Caco-2 (cell line): ENCODE measurements at regions of chr17 and their contacts with region 1.

Region 1: GRCh38 chr17:50200457-50201275 is 765 bp downstream of the COL1A1 start:
- DNase-seq: peak; percentile 96 to 98
- H3K4me3 ChIP-seq: peak overlapping the region; percentile 42
- H3K4me3 Mint-ChIP-seq: peak overlapping the region; percentile 73
- H3K27ac Mint-ChIP-seq: peak overlapping the region; percentile 7
- H3K4me1 ChIP-seq: peaks cover 23% of the 10 kb centered on the region
- H3K4me1 Mint-ChIP-seq: peaks cover 20% of the 10 kb centered on the region
- H3K27me3 ChIP-seq: 0 out of 2 replicates have a peak, but pooled peaks cover 1% of the 10 kb centered on the region
- H3K27me3 Mint-ChIP-seq: no peaks in the 10 kb centered on the region
- CTCF ChIP-seq: peak; percentile 99 to 100

Region 2: GRCh38 chr17:50101346-50102163 is 99.1 kb before region 1 on chr17:
- CTCF ChIA-PET with region 1: no interaction called
- POLR2A ChIA-PET with region 1: no interaction called
- intact Hi-C with region 1: no loop called
- DNase-seq: no peak
- H3K4me3 ChIP-seq: no peak overlapping the region
- H3K4me3 Mint-ChIP-seq: no peak overlapping the region
- H3K27ac Mint-ChIP-seq: no peak overlapping the region
- H3K4me1 ChIP-seq: no peaks in the 10 kb centered on the region
- H3K4me1 Mint-ChIP-seq: no peaks in the 10 kb centered on the region
- H3K27me3 ChIP-seq: no peaks in the 10 kb centered on the region
- H3K27me3 Mint-ChIP-seq: no peaks in the 10 kb centered on the region
- CTCF ChIP-seq: no peak

Region 3: GRCh38 chr17:50169121-50169764 is 31.4 kb before region 1 on chr17:
- CTCF ChIA-PET with region 1: interaction called, 99 read pairs
- POLR2A ChIA-PET with region 1: interaction called, 3 read pairs
- intact Hi-C with region 1: loop called (anchors 1 kb)
- DNase-seq: peak; percentile 88
- H3K4me3 ChIP-seq: no peak overlapping the region
- H3K4me3 Mint-ChIP-seq: no peak overlapping the region
- H3K27ac Mint-ChIP-seq: no peak overlapping the region
- H3K4me1 ChIP-seq: peaks cover 3% of the 10 kb centered on the region; the same call in 1 of the 2 replicates
- H3K4me1 Mint-ChIP-seq: peaks cover 7% of the 10 kb centered on the region
- H3K27me3 ChIP-seq: no peaks in the 10 kb centered on the region
- H3K27me3 Mint-ChIP-seq: no peaks in the 10 kb centered on the region
- CTCF ChIP-seq: peak; percentile 98 to 100

Region 4: GRCh38 chr17:50221864-50222545 is 21.3 kb after region 1 on chr17:
- CTCF ChIA-PET with region 1: interaction called, 30 read pairs
- POLR2A ChIA-PET with region 1: no interaction called
- intact Hi-C with region 1: no loop called
- DNase-seq: peak in 1 of 2 experiments; percentile 32
- H3K4me3 ChIP-seq: no peak overlapping the region
- H3K4me3 Mint-ChIP-seq: no peak overlapping the region
- H3K27ac Mint-ChIP-seq: peak overlapping the region; percentile 17
- H3K4me1 ChIP-seq: peaks cover 38% of the 10 kb centered on the region
- H3K4me1 Mint-ChIP-seq: peaks cover 32% of the 10 kb centered on the region
- H3K27me3 ChIP-seq: no peaks in the 10 kb centered on the region
- H3K27me3 Mint-ChIP-seq: no peaks in the 10 kb centered on the region
- CTCF ChIP-seq: no peak

Region 5: DNA sequence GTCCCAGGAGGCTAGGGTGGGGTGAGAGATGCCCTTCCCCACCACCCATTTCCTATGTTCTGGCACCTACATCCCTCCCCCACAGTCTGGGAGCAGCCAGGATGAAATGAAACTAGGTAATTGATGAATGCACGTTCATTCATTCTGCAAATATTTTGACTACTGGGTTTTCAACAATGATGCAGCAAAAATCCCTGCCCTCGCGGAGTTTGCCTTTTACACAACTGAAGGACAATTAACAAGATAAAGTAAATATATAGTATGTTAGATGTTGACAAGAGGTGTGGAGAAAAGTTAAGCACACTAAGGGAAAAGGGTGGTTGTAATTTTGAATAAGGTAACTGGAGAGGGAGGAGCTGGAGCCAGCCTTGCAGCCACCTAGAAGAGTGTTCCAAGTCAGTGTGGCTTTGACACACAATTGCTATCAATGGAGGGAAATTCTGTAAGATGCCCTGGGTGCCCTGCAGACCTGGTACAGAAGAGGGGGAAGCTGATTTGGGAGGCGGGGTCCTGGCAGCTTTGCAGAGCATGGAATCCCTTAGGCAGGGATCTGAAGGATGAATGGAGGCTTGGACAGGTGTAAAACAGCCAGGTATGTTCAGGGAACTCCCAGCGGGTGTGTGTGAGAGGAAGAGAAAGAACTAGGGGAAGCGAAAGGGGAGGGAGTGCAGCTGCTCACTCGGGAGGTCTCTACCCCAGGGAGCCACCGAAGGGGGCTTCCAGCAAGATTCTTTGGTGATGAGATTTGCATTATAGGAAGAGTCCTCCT is 76.1 kb after region 1 on chr17:
- CTCF ChIA-PET with region 1: interaction called, 245 read pairs
- POLR2A ChIA-PET with region 1: interaction called, 6 read pairs
- intact Hi-C with region 1: loop called (anchors 1 kb)
- DNase-seq: no peak
- H3K4me3 ChIP-seq: no peak overlapping the region
- H3K4me3 Mint-ChIP-seq: no peak overlapping the region
- H3K27ac Mint-ChIP-seq: peak overlapping the region; percentile 2
- H3K4me1 ChIP-seq: peaks cover 57% of the 10 kb centered on the region
- H3K4me1 Mint-ChIP-seq: peaks cover 30% of the 10 kb centered on the region
- H3K27me3 ChIP-seq: no peaks in the 10 kb centered on the region
- H3K27me3 Mint-ChIP-seq: no peaks in the 10 kb centered on the region
- CTCF ChIP-seq: no peak

Region 6: GRCh38 chr17:50345432-50346312 is 145.0 kb after region 1 on chr17 and contains the start of gene XYLT2:
- CTCF ChIA-PET with region 1: interaction called, 8 read pairs
- POLR2A ChIA-PET with region 1: interaction called, 4 read pairs
- intact Hi-C with region 1: loop called (anchors 1 kb)
- DNase-seq: peak; percentile 94 to 99
- H3K4me3 ChIP-seq: peak within 1 kb of the TSS; percentile 85
- H3K4me3 Mint-ChIP-seq: peak within 1 kb of the TSS; percentile 96
- H3K27ac Mint-ChIP-seq: peak within 1 kb of the TSS; percentile 81
- H3K4me1 ChIP-seq: peaks cover 13% of the 10 kb centered on the region
- H3K4me1 Mint-ChIP-seq: peaks cover 22% of the 10 kb centered on the region
- H3K27me3 ChIP-seq: no peaks in the 10 kb centered on the region
- H3K27me3 Mint-ChIP-seq: no peaks in the 10 kb centered on the region
- CTCF ChIP-seq: no peak
- total RNA-seq, gene XYLT2: 72.9 and 75.8 TPM in 2 replicates

Region 7: GRCh38 chr17:50452610-50453300 is 252.1 kb after region 1 on chr17:
- CTCF ChIA-PET with region 1: no interaction called
- POLR2A ChIA-PET with region 1: no interaction called
- intact Hi-C with region 1: no loop called
- DNase-seq: no peak
- H3K4me3 ChIP-seq: no peak overlapping the region
- H3K4me3 Mint-ChIP-seq: no peak overlapping the region
- H3K27ac Mint-ChIP-seq: no peak overlapping the region
- H3K4me1 ChIP-seq: peaks cover 16% of the 10 kb centered on the region
- H3K4me1 Mint-ChIP-seq: peaks cover 15% of the 10 kb centered on the region
- H3K27me3 ChIP-seq: no peaks in the 10 kb centered on the region
- H3K27me3 Mint-ChIP-seq: no peaks in the 10 kb centered on the region
- CTCF ChIP-seq: no peak